Astrocyte of the cerebellum (primary cell): ENCODE measurements at regions of chr7 and their contacts with region 1.

Region 1: DNA sequence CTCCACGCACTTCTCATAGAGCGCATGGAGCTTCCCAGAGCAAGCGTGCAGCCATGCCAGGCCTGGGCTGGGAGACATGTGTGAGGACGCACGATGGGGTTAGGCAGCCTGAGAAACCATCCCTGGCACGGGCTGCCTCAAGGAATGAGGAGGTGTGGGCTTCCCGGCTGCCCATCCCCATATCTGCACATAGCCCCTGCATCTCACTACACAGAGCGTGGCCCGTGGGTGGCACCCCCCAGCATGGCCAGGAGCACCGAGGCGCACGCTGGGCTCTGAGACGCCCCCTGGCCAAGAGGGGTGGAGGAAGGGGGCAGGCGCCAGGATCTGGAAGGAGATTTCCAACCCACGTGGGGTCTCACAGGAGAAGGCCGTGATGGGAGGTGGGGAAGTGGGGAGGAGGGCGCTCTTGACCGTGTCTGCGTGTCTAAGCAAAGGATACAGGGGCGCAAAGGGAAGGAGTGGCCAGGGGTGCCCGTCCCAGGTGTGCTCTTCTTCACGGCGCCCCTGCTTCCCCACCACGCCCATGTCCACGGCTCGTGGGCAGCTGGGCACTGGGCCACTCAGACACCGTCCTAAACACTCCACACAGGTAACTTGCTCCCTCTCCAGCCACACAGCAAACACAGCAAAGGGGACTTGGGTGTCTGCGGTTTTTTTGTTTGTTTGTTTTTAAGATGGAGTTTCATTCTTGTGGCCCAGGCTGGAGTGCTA is 340.5 kb downstream of the PTPRN2 start:
- DNase-seq: no peak
- H3K4me3 ChIP-seq: no peak overlapping the region
- CTCF ChIP-seq: no peak

Region 2: DNA sequence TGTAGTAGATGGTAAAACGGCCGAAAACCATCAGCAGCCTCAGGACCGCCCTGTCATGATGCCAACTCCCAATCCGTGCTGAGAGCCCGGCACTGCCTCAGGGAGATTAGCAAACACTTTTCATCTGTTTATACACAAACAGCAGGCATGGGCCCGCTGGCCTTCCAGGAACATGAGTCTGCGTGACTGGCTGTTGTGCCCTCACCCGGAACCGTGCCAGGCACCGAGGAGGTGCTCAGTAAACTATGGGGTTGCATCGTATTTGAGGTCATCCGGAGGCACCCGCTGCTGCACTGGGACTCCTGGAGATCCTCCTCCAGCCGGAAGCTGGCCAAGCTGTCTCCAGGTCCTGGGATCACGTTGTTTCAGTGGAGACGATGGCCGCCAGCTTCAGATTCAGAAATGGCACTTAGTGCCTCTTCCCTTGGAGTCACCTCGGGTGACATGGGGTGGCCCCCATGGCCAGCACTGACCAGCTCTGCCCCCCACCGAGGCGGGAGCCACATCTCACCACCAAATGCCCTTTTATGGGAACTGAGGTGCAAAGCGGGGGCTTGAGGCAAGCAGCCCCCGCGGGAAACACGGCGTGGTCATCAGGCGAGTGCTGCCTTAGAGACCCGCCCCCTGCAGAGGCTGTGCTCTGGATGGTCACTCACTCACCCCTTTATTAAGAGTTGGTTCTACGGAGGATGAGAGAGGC is 245.3 kb before region 1 on chr7:
- in situ Hi-C with region 1: no loop called
- DNase-seq: no peak
- H3K4me3 ChIP-seq: no peak overlapping the region
- CTCF ChIP-seq: no peak

Region 3: DNA sequence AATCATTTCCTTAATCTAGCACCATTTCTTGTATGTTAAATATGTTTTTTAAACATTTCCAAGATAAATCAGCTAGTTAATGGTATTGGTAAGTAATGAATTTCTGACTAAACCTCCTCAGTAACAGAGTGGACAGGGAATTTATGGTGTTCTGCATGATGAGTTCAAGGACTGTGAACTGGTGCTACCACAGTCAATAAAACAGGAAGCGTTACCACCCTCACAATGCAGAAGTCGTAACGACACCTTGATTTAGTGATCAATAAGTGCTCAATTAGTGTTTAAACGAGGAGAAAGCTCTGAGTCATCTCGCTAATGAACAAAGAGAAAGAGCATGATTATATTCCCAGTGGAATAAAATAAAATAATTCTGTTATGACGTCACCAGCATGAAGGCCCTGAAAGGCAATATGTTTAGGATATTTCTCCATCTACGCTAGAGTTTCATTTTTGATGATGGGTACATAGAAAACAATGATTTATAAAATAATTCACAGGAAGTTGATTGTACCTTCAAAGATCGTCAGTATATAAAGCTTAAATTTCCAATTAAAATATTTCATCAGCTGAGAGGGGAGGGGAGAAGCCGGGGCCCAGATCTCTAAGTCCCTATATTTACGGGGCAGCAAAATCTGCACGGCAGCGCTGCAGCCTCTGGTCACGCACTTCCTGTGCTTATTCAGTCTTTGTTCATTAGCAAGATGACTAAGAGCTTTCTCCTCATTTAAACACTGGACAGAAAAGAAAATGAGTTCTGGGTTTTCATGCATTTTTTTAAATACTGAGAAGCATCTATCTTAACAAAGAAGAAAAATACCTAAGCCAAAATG is 60.0 kb before region 1 on chr7:
- in situ Hi-C with region 1: loop called (anchors 5 kb)
- DNase-seq: no peak
- H3K4me3 ChIP-seq: no peak overlapping the region
- CTCF ChIP-seq: no peak